GM23248 (cell line): ENCODE measurements at regions of chr1 and their contacts with region 1.

Region 1: DNA sequence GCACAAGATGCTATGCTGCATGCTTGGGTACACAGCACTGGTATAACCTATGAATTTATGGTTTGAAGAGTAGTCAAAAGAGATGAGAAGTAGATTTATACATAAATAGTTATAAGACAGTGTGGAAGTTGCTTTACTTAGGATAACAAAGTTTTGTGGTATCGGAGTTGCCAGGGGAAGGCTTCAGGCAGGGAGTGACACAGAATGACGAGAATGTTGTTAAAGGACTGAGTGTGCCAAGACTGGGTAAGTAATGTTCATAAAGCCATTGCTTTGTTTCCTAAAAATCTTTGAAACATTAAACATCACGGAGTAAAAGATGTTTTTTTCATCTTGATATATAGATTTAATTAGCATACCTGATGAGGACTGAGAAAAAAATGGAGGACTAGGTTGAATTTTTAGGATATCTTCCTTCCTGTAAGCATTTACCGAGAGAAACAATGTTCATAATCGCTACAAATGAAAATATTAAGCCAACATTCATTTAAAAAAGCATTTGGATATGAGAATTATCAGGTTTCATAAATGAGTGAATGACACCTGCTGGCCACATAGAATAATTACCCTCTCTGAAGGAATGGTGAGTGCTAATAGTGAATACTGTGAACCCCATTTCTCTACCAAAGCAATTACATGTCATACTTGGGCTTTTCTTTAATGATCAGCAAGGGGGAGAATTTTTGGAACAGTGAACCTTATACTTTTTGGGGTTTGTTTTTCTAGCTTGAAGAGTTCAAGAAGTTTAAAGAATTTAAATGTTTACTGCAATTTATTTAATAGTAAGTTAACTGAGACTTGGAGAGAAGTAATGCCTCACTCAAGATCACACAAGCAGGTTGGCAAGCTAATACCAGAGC is 28.4 kb downstream of the EXTL2 start:
- DNase-seq: peak; percentile 71
- H3K4me3 ChIP-seq: 0 out of 2 replicates have a peak overlapping the region, but pooled peaks have one; percentile 29
- H3K27ac ChIP-seq: peak overlapping the region; percentile 47
- H3K4me1 ChIP-seq: peaks cover 41% of the 10 kb centered on the region
- H3K27me3 ChIP-seq: no peaks in the 10 kb centered on the region

Region 2: GRCh38 chr1:100463809-100464424 is 402.4 kb before region 1 on chr1:
- in situ Hi-C with region 1: no loop called
- DNase-seq: peak; percentile 83
- H3K4me3 ChIP-seq: no peak overlapping the region
- H3K27ac ChIP-seq: no peak overlapping the region
- H3K4me1 ChIP-seq: no peaks in the 10 kb centered on the region
- H3K27me3 ChIP-seq: no peaks in the 10 kb centered on the region

Region 3: GRCh38 chr1:100606438-100606837 is 259.8 kb before region 1 on chr1:
- in situ Hi-C with region 1: loop called (anchors 10 kb)
- DNase-seq: peak; percentile 81
- H3K4me3 ChIP-seq: no peak overlapping the region
- H3K27ac ChIP-seq: no peak overlapping the region
- H3K4me1 ChIP-seq: peaks cover 25% of the 10 kb centered on the region
- H3K27me3 ChIP-seq: no peaks in the 10 kb centered on the region